HEK293 (cell line): ENCODE measurements at regions of chr2 and their contacts with region 1.

Region 1: GRCh38 chr2:230762317-230762896 is 49.8 kb downstream of the CAB39 start:
- H3K4me3 ChIP-seq: no peak overlapping the region
- H3K27ac ChIP-seq: no peak overlapping the region
- H3K4me1 ChIP-seq: peaks cover 14% of the 10 kb centered on the region
- CTCF ChIP-seq: no peak

Region 2: DNA sequence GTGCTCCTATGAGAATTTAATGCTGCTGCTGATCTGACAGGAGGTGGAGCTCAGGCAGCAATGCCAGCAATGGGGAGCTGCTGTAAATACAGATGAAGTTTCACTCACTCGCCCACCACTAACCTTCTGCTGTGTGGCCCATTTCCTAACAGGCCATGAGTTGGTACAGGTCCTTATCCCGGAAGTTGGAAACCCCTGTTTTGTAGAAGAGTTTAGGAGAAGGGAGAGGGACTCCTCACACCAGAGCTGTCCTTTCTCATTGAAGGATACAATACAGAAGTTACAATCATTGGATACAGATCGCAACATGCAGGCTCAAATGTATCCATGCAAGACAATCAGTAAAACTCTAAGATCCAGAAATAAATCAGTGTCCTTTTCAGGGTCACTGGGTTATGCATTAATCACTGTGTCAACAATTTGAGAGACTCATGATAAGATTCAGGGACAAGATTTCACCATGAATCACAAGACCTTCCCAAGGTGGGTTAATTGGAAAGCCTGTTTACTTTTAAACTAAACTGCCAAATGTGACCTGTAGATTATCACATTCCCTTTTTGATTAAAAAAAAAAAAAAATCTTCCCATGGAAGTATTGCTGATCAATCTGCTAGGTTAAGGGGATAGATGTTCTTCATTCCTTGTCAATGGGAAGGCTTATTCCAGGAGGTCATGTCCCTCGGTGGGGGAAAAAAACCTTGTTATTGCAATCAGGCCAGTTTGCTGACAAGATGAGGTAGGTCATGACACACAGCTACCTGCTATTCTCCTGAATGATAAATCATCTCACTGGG is 249.3 kb before region 1 on chr2:
- CTCF ChIA-PET with region 1: no interaction called
- POLR2A ChIA-PET with region 1: no interaction called
- H3K4me3 ChIP-seq: no peak overlapping the region
- H3K27ac ChIP-seq: no peak overlapping the region
- H3K4me1 ChIP-seq: no peaks in the 10 kb centered on the region
- CTCF ChIP-seq: no peak

Region 3: DNA sequence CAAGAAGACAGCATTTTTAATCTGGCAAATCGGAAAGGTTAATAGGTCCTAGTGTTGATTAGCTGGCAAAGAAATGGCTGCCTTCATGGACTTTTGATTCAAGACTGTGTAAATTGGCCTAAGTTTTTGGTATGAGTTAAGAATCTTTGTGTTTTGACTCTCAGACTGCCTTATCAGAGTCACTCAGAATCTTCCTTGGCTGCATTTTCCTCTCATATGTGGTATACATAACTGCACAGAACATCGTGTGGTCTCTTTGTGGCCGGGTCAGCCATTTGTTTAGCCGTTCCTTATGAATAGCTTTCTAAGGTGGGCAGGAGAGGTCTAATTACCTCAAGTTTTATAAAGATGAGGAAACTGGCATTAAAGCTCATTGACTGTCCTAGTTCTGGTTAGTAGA is 19.6 kb before region 1 on chr2:
- CTCF ChIA-PET with region 1: interaction called, 11 read pairs
- POLR2A ChIA-PET with region 1: no interaction called
- H3K4me3 ChIP-seq: no peak overlapping the region
- H3K27ac ChIP-seq: no peak overlapping the region
- H3K4me1 ChIP-seq: peaks cover 13% of the 10 kb centered on the region
- CTCF ChIP-seq: no peak

Region 4: DNA sequence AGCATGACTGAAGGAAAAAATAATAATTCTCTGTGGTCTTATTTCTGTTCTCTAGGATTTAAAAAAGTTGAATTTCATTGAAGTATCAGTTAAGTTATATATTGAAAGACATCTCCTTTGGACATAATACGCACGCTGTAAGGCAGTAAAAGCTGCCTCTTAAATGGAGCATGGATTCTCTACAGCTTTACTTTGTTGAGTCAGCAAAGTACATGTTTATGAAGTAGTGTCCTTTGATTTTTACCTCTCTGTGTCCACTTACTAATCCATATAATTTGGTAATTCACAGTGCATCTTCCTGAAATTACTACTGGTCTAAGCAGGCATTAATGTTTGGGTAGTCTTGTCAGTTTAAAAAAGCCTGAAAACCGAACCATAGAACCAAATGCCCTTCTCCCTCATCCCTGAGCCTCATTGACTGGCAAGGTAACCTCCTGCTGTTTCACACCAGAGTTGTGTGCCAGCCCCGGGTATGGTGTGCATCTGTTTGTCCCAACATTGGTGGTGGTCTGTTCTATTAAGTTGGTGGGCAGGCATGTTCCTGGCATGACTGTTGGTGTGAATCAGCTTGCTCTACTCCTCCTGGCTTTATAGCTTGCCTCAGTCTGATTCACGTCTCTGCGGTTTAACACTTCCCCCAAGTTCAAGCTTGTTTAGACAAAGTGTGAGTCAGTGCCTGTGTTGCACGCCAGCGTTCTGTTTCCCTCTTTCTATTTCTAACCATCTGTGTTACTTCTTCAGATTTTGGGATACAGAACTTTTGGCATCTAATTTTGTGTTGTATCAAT is 31.4 kb after region 1 on chr2:
- CTCF ChIA-PET with region 1: interaction called, 14 read pairs
- POLR2A ChIA-PET with region 1: interaction called, 5 read pairs
- H3K4me3 ChIP-seq: no peak overlapping the region
- H3K27ac ChIP-seq: peak overlapping the region; percentile 71
- H3K4me1 ChIP-seq: peaks cover 15% of the 10 kb centered on the region
- CTCF ChIP-seq: no peak